ENCODE measurements at regions of chr20 and their contacts with region 1.

Region 1: DNA sequence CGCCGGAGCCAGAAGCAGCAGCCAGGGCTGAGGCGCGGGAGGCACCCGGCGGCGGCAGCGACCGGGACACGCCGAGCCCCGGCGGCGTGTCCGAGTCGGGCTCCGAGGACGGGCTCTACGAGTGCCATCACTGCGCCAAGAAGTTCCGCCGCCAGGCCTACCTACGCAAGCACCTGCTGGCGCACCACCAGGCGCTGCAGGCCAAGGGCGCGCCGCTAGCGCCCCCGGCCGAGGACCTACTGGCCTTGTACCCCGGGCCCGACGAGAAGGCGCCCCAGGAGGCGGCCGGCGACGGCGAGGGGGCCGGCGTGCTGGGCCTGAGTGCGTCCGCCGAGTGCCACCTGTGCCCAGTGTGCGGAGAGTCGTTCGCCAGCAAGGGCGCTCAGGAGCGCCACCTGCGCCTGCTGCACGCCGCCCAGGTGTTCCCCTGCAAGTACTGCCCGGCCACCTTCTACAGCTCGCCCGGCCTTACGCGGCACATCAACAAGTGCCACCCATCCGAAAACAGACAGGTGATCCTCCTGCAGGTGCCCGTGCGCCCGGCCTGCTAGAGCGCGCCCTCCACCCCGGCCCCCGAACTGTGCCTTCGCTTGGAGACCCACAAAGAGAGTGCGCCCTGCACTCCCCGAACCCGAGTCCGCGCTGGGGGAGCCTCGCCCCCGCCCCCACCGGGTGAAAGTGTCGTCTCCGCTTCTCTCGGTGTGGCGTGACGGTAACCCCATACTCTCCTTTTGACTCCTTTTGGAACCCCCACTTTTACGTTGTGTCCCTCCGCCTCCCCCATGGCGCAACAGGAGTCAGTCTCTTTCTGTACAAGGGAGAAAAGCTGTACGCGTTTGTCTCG is 1.6 kb downstream of the INSM1 start:
- DNase-seq: peak in 4 of 5 donors; percentile 44 to 71 (median 60)
- H3K4me3 ChIP-seq: no peak overlapping the region
- H3K27ac ChIP-seq: no peak overlapping the region
- H3K4me1 ChIP-seq: peaks cover 0 to 8% (median 0%) of the 10 kb centered on the region in 3 donors
- H3K27me3 ChIP-seq: peaks cover 48% of the 10 kb centered on the region
- CTCF ChIP-seq: no peak

Region 2: GRCh38 chr20:20267685-20268370 is 101.6 kb before region 1 on chr20:
- intact Hi-C with region 1: no loop called
- DNase-seq: peak in 1 of 5 donors; percentile 19
- H3K4me3 ChIP-seq: no peak overlapping the region
- H3K27ac ChIP-seq: no peak overlapping the region
- H3K4me1 ChIP-seq: no peaks in the 10 kb centered on the region
- H3K27me3 ChIP-seq: no peaks in the 10 kb centered on the region
- CTCF ChIP-seq: no peak

Region 3: DNA sequence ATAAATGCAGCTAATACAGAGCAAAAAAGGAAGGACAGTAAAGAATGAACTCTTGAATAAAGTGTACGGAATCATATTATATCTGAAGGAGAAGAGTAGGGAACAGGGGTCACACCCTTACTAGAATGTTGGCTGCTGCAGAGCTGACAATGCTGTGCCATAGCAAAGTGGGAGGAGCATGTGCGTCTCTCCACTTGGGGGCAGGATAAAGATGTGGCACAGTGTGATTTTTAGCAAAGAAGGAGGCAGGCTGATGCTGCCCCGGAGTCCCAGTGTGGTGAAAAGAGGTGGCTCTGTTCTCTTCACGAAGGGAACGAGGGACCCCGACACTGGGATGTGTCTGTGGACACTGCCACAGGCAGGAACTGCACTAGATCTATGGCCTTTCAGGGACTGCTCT is 66.0 kb after region 1 on chr20:
- intact Hi-C with region 1: loop called (anchors 10 kb)
- DNase-seq: no peak
- H3K4me3 ChIP-seq: no peak overlapping the region
- H3K27ac ChIP-seq: no peak overlapping the region
- H3K4me1 ChIP-seq: no peaks in the 10 kb centered on the region
- H3K27me3 ChIP-seq: no peaks in the 10 kb centered on the region
- CTCF ChIP-seq: no peak

Measured in kidney (tissue), 22 donors.